Heart right ventricle (tissue), 16 donors: ENCODE measurements at regions of chr6 and their contacts with region 1.

Region 1: DNA sequence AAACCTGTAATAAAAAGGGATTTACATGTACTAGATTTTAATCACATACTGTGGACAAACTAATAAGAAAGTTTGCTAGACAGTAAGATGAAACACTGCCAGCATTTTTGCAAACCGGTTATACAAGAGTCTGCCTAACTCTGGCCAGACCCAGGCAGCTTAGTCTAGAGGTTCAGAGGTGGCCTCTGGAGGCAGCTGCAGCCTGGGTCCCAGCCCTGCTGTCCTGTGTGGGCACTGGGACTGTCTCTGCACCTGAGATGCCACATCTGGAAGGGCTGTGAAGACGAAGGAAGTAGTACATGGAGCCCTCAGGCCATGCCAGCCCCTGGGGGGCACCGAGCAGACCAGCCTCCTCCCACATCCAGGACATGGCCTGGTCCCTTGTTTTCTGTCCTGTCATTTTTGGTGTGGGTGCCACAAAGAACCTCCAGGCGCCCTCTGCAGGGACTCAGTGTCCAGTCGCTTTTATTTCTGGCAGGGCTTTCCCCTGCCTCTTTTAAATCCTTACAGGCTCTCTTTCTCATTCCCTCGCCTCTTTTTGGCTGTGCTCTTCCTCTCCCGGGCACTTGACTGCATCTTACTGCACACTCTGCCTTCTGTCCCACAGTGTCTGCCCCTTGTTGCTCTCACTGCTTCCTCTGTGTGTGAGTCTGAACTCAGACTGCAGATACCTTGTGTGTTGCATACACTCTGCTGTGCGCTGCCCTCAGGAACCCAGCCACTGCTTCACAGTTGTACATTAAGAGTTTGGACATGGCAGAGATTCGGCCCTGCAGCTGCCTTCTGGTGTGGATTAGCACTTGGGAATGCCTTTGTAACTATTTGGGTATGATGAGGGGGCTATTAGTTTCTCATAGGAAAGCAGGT is 216.7 kb downstream of the ZDHHC14 start:
- DNase-seq: peak; percentile 37 to 49
- ATAC-seq: peak; percentile 47 to 72 (median 64)
- H3K4me3 ChIP-seq: no peak overlapping the region
- H3K27ac ChIP-seq: peak overlapping the region in 1 of 10 donors; percentile 15
- H3K4me1 ChIP-seq: peaks cover 0 to 9% (median 3%) of the 10 kb centered on the region in 9 donors
- H3K27me3 ChIP-seq: no peaks in the 10 kb centered on the region
- CTCF ChIP-seq: peak in 8 of 9 donors; percentile 44 to 71 (median 57)

Region 2: DNA sequence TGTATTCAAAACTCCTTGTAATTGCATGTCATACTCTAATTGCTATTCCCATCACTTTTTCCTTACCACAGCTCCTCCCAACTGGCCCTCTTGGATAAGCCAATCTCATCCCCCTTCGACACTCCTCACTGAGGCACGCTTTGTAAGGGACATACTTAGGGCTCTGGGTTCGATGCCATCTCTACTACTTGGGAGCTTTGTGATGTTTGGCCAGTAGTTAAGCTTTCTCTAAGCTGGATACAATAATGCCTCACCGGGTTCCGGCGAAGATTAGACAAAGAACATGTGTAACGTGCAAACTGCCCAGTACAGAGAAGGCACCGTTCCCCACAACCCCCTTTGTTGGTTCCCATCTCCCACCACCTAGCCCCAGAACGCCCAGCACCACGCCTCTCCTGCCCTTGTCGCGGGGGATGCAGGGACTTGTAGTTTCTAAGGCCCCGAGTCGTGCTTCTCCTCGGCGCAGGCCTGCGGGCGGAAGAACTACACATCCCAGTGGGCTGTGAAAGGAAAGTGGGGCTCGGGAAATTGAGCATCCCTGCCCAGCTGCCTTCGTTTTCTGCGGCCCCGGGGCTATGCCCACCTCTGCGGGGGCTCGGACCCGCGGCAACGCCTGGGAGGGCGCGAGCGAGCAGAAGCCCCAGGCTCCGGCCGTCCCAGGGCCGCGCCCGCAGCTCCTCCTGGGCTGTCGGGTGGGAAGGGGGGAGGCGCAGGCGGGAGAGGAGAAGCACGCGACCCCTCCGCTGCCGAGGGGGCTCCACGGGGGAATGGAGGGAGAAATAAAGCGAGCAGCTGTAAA is 217.8 kb before region 1 on chr6:
- intact Hi-C with region 1: loop called in 4 of 10 experiments (anchors 5 to 10 kb)
- DNase-seq: peak; percentile 87 to 94
- ATAC-seq: peak; percentile 90 to 95 (median 94)
- H3K4me3 ChIP-seq: peak overlapping the region; percentile 74 to 99 (median 95)
- H3K27ac ChIP-seq: peak overlapping the region; percentile 76 to 98 (median 96)
- H3K4me1 ChIP-seq: peaks cover 0 to 31% (median 22%) of the 10 kb centered on the region in 9 donors
- H3K27me3 ChIP-seq: no peaks in the 10 kb centered on the region
- CTCF ChIP-seq: no peak

Region 3: GRCh38 chr6:157614026-157614568 is 16.4 kb after region 1 on chr6:
- intact Hi-C with region 1: no loop called
- DNase-seq: no peak
- ATAC-seq: no peak
- H3K4me3 ChIP-seq: no peak overlapping the region
- H3K27ac ChIP-seq: no peak overlapping the region
- H3K4me1 ChIP-seq: peaks cover 0 to 10% (median 6%) of the 10 kb centered on the region in 9 donors
- H3K27me3 ChIP-seq: no peaks in the 10 kb centered on the region
- CTCF ChIP-seq: peak in 2 of 9 donors; percentile 9 to 10